ENCODE measurements at regions of chr12 and their contacts with region 1.

Region 1: GRCh38 chr12:32125455-32126084 is 18.9 kb downstream of the BICD1 start:
- DNase-seq: no peak
- CTCF ChIP-seq: no peak

Region 2: DNA sequence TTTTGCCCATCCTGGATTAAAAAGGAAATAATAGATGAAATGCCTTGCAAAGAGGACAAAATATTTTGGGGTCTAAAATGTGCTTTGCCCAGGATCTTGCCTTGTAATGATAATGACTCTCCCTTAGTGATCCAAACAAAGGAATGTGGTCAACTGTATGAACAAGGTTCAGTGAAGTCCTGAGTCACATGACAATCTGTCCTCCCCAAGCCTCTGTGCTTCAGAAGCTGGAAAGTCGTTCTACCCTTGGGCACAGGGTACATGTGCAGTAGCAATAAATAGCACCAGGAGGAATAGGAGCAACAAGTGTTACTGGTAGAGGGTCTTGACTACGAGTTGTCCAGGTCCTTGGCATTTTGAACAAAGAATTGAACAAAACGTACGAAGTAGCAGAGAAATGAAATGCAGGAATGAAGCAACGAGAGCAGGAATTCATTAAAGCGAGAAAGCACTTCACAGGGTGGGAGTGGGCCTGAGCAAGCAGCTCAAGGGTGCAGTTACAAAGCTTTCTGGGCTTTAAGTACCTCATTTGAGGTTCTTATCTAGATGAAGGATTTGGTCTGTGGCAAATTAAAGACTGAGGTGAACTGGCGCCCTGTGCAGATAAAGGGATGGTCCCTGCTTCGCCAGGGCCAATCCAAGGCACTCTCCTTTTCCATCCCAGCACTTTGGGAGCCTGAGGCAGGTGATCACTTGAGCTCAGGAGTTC is 100.5 kb before region 1 on chr12:
- CTCF ChIA-PET with region 1: no interaction called
- POLR2A ChIA-PET with region 1: no interaction called
- DNase-seq: no peak
- CTCF ChIP-seq: no peak

Region 3: DNA sequence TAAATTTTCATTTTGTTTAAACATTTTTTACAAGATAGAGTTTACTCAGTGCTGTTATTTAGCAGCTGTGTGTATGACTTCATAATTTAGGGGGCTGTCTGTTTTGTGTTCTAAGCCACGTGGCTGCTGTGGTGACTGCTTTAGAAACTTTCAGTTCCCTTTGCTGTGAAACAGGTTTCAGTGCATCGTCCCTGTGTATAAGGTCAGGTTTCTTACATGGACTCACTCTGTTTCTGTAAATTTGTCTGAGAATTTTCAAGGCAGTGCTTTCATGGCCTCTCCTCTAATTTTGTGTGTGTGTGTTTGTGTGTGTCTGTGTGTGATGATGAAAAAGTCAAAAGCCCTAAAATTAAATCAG is 13.5 kb after region 1 on chr12:
- CTCF ChIA-PET with region 1: interaction called, 12 read pairs
- POLR2A ChIA-PET with region 1: interaction called, 5 read pairs
- DNase-seq: peak; percentile 78
- CTCF ChIP-seq: no peak

Measured in GM10248 (cell line).